Psoas muscle (tissue), 8 donors: ENCODE measurements at regions of chr2 and their contacts with region 1.

Region 1: GRCh38 chr2:69717861-69718273 is 24.1 kb upstream of the ANXA4 start:
- DNase-seq: no peak
- ATAC-seq: no peak
- H3K4me3 ChIP-seq: no peak overlapping the region
- H3K27ac ChIP-seq: no peak overlapping the region
- H3K4me1 ChIP-seq: peaks cover 3% of the 10 kb centered on the region
- H3K27me3 ChIP-seq: no peaks in the 10 kb centered on the region
- CTCF ChIP-seq: no peak

Region 2: GRCh38 chr2:69291004-69291650 is 426.7 kb before region 1 on chr2:
- intact Hi-C with region 1: no loop called
- DNase-seq: no peak
- ATAC-seq: no peak
- H3K4me3 ChIP-seq: no peak overlapping the region
- H3K27ac ChIP-seq: no peak overlapping the region
- H3K4me1 ChIP-seq: no peaks in the 10 kb centered on the region
- H3K27me3 ChIP-seq: no peaks in the 10 kb centered on the region
- CTCF ChIP-seq: no peak

Region 3: DNA sequence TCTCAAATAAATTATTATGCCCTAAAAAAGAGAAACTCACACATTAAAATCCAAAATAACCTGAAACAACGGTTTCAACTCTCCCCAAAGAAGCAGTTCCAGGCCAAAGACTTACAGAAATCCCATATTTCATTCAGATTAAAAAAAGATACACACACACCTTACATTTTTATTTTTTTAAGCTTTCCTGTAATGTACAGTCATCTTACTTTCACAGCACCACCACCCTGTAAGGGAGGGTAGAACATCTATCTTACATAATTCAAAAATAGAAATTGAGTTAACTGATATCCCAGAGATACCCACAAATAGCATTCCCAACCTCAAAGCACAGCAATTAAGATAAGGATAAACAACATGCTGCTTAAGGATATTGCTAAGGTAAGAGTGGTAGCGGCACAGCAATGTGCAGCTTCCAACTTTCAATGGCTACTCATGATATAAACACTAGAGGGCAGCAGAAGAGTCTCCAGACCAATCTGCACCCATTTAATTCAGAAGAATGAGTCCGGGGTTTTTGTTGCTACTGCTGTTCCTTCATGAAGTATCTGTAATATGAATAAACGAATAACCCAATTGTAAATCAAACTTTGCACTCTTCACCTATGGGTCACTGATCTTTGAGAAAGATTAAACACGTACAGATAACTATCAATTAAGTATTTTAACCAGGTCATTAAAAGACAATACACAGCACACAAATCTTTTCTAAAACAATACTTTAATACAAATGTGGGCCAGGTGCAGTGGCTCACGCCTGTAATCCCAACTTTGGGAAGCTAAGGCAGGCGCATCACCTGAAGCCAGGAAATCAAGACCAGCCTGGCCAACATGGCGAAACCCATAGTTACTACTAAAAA is 342.1 kb before region 1 on chr2:
- intact Hi-C with region 1: loop called in 1 of 2 experiments (anchors 10 kb)
- DNase-seq: no peak
- ATAC-seq: peak; percentile 54 to 92 (median 79)
- H3K4me3 ChIP-seq: no peak overlapping the region
- H3K27ac ChIP-seq: no peak overlapping the region
- H3K4me1 ChIP-seq: no peaks in the 10 kb centered on the region
- H3K27me3 ChIP-seq: no peaks in the 10 kb centered on the region
- CTCF ChIP-seq: peak; percentile 72

Region 4: DNA sequence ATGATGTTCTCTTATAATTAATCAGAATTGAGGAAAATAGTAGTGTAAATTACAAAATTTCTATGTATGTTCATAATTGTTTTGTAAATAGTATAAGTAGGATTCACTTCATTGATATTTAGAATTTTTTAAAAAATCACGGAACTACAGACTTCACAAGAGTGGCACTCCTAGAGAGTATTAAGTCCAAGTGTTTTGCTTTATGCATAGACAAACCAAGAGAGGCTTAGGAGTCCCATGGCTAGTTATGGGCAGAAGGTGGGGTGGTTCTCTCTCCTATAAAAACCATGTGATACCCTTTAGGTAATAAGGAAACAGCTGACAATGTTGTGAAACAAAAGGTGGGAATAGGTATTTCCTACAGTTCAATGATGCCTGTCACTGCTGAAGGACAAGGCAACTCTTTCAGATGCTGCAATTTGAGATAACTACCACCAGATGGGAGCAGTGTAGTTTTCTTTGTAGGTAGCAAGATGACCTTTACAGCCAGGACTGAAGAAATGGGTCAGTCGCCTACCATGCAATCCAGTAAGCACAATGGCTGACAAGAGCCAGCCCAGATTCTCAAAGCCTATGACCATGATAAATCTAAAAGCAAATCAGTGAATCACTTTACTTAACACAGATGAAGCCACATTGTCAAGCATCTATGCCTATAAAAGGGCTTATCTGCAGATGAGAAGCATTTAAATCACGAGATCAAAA is 158.3 kb before region 1 on chr2:
- intact Hi-C with region 1: loop called (anchors 1 to 5 kb)
- DNase-seq: no peak
- ATAC-seq: peak; percentile 90 to 95 (median 93)
- H3K4me3 ChIP-seq: peak overlapping the region; percentile 4
- H3K27ac ChIP-seq: peak overlapping the region; percentile 19
- H3K4me1 ChIP-seq: peaks cover 43% of the 10 kb centered on the region
- H3K27me3 ChIP-seq: no peaks in the 10 kb centered on the region
- CTCF ChIP-seq: peak; percentile 76

Region 5: GRCh38 chr2:69770193-69771146 is 52.6 kb after region 1 on chr2:
- intact Hi-C with region 1: no loop called
- DNase-seq: peak; percentile 33 to 64
- ATAC-seq: peak; percentile 92 to 95 (median 94)
- H3K4me3 ChIP-seq: peak overlapping the region; percentile 37
- H3K27ac ChIP-seq: peak overlapping the region; percentile 92
- H3K4me1 ChIP-seq: peaks cover 70% of the 10 kb centered on the region
- H3K27me3 ChIP-seq: no peaks in the 10 kb centered on the region
- CTCF ChIP-seq: no peak

Region 6: GRCh38 chr2:69789175-69789721 is 71.4 kb after region 1 on chr2:
- intact Hi-C with region 1: no loop called
- DNase-seq: no peak
- ATAC-seq: peak in 1 of 4 donors; percentile 59
- H3K4me3 ChIP-seq: no peak overlapping the region
- H3K27ac ChIP-seq: peak overlapping the region; percentile 37
- H3K4me1 ChIP-seq: no peaks in the 10 kb centered on the region
- H3K27me3 ChIP-seq: no peaks in the 10 kb centered on the region
- CTCF ChIP-seq: no peak

Region 7: DNA sequence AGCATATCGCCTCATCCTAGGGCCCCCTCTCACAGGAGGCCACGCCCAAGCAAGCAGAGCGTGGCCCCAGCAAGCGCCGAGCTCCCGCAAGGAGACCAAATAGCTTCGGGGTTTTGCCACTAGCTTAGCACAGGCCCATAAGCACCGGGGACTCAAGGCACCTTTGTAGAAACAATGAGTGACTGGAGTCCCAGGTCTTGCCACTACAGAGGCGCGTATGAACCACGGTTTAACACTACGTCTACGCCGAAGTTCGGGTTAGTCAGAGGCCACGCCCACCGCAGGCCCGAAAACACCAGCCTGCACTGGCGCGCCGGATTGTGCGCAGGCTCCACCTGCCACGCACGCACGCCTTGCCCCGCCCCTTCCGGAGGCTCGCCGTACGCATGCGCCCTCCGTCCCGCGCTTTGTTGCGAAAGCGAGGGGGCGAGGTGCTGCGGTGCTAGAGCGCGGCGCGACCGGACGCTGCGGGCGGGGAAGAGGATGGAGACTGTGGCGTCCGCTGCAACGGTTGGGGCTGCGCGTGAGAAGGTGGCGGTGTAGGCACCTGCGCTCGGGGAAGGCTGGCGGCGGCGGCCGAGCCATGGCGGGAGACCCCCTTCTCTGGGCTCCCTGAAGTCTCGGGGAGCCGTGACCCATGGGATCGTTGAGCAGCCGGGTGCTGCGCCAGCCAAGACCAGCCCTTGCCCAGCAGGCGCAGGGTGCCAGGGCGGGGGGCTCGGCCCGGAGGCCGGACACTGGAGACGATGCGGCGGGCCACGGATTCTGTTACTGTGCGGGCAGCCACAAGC is 111.6 kb after region 1 on chr2 and contains the start of gene GMCL1:
- intact Hi-C with region 1: no loop called
- DNase-seq: peak; percentile 98 to 99
- ATAC-seq: peak; percentile 98 to 99 (median 98)
- H3K4me3 ChIP-seq: peak within 1 kb of the TSS; percentile 98
- H3K27ac ChIP-seq: peak within 1 kb of the TSS; percentile 98
- H3K4me1 ChIP-seq: peaks cover 29% of the 10 kb centered on the region
- H3K27me3 ChIP-seq: no peaks in the 10 kb centered on the region
- CTCF ChIP-seq: no peak
- total RNA-seq, gene GMCL1: 3.0 to 4.1 (median 3.1) TPM